ENCODE measurements at regions of chr19 and their contacts with region 1.

Region 1: GRCh38 chr19:18594096-18594823 is 5.7 kb downstream of the REX1BD start:
- DNase-seq: peak in 9 of 10 donors; percentile 31 to 94 (median 56)

Region 2: DNA sequence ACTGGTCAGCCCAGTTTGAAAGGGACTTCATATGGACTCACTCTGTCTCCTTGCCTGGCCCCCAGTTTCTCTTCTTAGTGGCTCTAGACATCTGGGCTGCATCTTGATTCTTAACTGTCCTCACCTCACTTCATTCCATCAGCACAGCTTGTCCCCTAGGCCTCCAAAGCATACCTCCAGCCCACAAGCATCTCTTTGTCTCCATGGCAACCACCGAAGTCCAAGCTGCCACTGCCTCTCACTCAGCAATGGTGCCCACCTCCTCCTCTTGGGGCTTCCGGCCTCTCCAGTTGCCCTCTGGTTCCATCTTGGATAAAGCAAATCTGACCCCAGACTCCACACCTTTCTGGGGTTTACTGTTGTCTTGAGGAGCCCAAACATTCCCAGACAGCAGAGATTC is 32.7 kb after region 1 on chr19:
- intact Hi-C with region 1: no loop called
- DNase-seq: peak in 1 of 10 donors; percentile 55

Region 3: GRCh38 chr19:18644196-18645034 is 50.2 kb after region 1 on chr19:
- intact Hi-C with region 1: no loop called
- DNase-seq: peak in 1 of 10 donors; percentile 84

Region 4: DNA sequence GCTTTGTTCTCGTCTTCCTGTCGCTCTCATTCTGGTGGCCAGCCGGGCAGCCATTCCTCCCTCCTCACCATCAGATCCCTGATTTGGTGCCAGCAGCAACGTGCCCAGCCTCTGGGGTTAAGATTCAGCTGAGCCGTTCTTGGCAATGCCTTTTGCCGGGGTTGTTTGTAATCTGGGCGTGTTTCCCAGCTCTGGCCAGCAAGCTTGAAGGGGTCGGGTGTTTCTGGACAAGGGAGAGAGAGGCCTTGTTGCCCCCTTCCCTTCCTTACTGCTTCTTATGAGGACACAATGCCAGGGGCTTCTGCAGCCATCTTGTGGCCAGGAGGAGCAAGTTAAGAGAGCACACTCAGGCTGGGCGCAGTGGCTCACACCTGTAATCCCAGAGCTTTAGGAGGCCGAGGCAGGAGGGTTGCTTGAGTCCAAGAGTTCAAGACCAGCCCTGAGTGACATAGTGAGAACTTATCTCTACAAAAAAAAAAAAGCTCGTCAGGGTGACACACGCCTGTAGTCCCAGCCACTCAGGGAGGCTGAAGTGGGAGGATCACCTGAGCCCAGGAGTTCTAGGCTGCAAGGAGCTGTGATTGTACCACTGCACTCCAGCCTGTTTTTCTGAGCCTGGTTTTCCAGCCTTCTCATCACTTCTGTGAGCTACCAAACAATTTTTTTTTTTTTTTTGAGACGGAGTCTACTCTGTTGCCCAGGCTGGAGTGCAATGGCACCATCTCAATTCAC is 78.5 kb after region 1 on chr19:
- intact Hi-C with region 1: loop called (anchors 5 kb)
- DNase-seq: peak in 9 of 10 donors; percentile 16 to 87 (median 50)

Region 5: DNA sequence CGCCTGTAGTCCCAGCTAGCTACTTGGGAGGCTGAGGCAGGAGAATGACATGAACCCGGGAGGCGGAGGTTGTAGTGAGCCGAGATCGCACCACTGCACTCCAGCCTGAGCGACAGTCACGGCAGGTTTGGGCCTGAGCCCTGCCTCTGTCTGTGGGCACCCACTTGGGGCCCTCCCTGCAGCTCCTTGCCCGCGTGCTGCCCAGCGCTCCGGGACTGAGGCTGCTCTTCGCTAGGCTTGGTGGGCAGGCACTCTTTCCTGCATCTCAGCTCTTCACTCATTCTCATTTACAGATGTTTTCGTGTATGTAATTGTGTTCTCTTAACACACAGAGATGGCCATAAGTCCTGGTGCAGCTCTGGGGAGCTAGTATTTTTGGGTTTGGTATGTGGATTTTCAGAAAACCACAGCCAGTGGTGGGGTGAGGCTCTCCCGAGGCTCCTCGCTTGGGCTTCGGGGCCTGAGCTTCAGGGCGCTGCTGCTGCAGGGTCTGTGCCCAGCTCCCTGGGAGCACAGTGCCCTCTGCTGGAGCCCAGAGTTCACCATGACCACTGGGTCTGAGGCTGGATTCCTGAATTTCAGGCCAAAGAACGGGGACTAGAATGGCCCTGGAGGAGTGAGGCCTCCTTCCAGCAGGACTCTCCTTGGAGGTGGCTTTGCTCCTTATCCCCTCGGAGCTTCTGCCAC is 252.7 kb after region 1 on chr19:
- intact Hi-C with region 1: loop called (anchors 1 kb)
- DNase-seq: peak; percentile 61 to 98 (median 84)